ENCODE measurements at regions of chr7 and their contacts with region 1.

Region 1: DNA sequence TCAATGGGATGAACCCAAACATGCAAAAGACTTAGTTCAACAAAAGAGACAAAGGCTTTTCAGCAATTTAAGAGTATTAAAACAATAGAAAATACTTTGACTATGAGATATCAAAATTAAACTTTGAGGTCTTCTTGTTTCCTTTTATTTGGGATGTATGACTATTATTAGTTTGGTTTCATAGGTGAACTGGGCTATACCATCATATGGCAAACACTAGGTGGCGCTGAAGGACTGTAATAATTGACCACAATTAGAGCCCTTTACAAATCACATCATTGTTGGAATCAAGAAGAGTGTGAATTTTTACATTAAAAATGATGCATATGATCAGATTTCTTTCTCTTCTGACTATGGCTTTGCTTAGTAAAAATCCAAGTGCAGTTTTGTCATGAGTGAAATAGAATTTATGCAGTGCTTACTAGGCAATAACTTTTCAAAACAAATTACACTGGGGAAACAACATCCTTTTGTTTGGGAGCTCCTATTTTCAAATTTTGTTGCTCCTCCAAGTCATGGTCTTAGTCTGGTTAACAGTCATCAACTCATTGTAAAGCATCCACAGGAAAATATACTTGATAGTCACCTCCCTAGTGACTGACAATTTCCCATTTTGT is 14.7 kb upstream of the NXPH1 start:
- DNase-seq: peak; percentile 64
- ATAC-seq: peak; percentile 33
- H3K4me3 Mint-ChIP-seq: no peak overlapping the region
- H3K27ac Mint-ChIP-seq: no peak overlapping the region
- H3K4me1 Mint-ChIP-seq: no peaks in the 10 kb centered on the region
- H3K27me3 Mint-ChIP-seq: peaks cover 7% of the 10 kb centered on the region

Region 2: GRCh38 chr7:8042796-8043535 is 375.8 kb before region 1 on chr7:
- CTCF ChIA-PET with region 1: no interaction called
- POLR2A ChIA-PET with region 1: no interaction called
- intact Hi-C with region 1: no loop called
- DNase-seq: no peak
- ATAC-seq: no peak
- H3K4me3 Mint-ChIP-seq: no peak overlapping the region
- H3K27ac Mint-ChIP-seq: peak overlapping the region; percentile 60
- H3K4me1 Mint-ChIP-seq: peaks cover 67% of the 10 kb centered on the region
- H3K27me3 Mint-ChIP-seq: no peaks in the 10 kb centered on the region

Region 3: GRCh38 chr7:8115547-8116402 is 303.0 kb before region 1 on chr7:
- CTCF ChIA-PET with region 1: no interaction called
- POLR2A ChIA-PET with region 1: no interaction called
- intact Hi-C with region 1: no loop called
- DNase-seq: no peak
- ATAC-seq: no peak
- H3K4me3 Mint-ChIP-seq: no peak overlapping the region
- H3K27ac Mint-ChIP-seq: peak overlapping the region; percentile 14
- H3K4me1 Mint-ChIP-seq: peaks cover 62% of the 10 kb centered on the region
- H3K27me3 Mint-ChIP-seq: no peaks in the 10 kb centered on the region

Region 4: DNA sequence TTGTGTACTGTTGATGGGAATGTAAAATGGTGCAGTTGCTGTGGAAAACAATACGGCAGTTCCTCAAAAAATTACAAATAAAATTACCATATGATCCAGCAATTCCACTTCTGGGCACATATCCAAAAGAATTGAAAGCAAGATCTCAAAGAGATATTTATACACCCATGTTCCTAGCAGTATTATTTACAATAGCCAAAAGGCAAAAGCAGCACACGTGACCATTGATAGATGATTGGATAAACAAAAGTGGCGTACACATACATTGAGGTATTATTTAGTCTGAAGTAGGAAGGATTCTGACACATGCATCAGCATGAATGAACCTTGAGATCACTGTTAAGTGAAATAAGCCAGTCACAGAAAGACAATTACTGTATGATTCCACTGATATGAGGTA is 14.7 kb before region 1 on chr7:
- CTCF ChIA-PET with region 1: interaction called, 6 read pairs
- POLR2A ChIA-PET with region 1: no interaction called
- intact Hi-C with region 1: loop called in 1 of 2 experiments (anchors 2 kb)
- DNase-seq: no peak
- ATAC-seq: no peak
- H3K4me3 Mint-ChIP-seq: no peak overlapping the region
- H3K27ac Mint-ChIP-seq: no peak overlapping the region
- H3K4me1 Mint-ChIP-seq: no peaks in the 10 kb centered on the region
- H3K27me3 Mint-ChIP-seq: peaks cover 20% of the 10 kb centered on the region

Region 5: GRCh38 chr7:8724080-8724718 is 305.5 kb after region 1 on chr7:
- CTCF ChIA-PET with region 1: no interaction called
- POLR2A ChIA-PET with region 1: no interaction called
- intact Hi-C with region 1: loop called (anchors 1 to 5 kb)
- DNase-seq: peak; percentile 58
- ATAC-seq: no peak
- H3K4me3 Mint-ChIP-seq: no peak overlapping the region
- H3K27ac Mint-ChIP-seq: no peak overlapping the region
- H3K4me1 Mint-ChIP-seq: no peaks in the 10 kb centered on the region
- H3K27me3 Mint-ChIP-seq: no peaks in the 10 kb centered on the region

Region 6: DNA sequence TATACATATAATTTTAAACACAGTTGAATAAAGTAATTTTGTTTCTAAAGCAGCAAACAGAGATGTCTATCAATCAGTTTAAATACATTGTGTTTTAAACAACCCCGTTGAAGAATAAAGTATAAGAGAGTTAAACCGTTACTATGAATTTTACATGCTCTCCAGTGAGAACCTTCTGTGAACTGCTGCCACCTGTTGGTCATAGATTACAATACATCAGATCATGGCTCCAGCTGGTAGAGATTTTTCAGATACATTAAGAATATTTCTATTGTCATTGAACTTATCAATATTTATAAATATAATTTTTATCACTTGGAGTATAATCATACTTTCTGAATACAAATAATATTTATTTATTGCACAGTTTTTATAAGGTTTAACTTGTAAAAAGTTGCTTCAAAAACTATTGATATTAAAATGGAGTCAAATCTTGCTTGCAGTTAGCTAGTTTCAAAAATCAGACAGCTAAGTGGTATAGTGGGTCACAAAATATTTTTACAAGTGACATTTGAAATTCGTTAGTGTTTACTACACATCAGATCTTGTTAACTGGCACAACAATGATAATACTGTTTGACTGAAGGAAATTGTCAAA is 1993.8 kb after region 1 on chr7:
- CTCF ChIA-PET with region 1: interaction called, 3 read pairs
- POLR2A ChIA-PET with region 1: no interaction called
- intact Hi-C with region 1: loop called (anchors 2 to 5 kb)
- DNase-seq: peak; percentile 19
- ATAC-seq: no peak
- H3K4me3 Mint-ChIP-seq: no peak overlapping the region
- H3K27ac Mint-ChIP-seq: no peak overlapping the region
- H3K4me1 Mint-ChIP-seq: no peaks in the 10 kb centered on the region
- H3K27me3 Mint-ChIP-seq: peaks cover 1% of the 10 kb centered on the region

Measured in activated CD4-positive, alpha-beta T cell treated with anti-CD3 and anti-CD28 coated beads for 36 hours (primary cell).